ENCODE measurements at regions of chr1 and their contacts with region 1.

Region 1: GRCh38 chr1:154878371-154879022 is 8.4 kb upstream of the KCNN3 start:
- DNase-seq: peak; percentile 30
- H3K4me3 ChIP-seq: no peak overlapping the region
- H3K27ac ChIP-seq: no peak overlapping the region
- H3K27me3 ChIP-seq: peaks cover 59% of the 10 kb centered on the region
- CTCF ChIP-seq: peak; percentile 84

Region 2: DNA sequence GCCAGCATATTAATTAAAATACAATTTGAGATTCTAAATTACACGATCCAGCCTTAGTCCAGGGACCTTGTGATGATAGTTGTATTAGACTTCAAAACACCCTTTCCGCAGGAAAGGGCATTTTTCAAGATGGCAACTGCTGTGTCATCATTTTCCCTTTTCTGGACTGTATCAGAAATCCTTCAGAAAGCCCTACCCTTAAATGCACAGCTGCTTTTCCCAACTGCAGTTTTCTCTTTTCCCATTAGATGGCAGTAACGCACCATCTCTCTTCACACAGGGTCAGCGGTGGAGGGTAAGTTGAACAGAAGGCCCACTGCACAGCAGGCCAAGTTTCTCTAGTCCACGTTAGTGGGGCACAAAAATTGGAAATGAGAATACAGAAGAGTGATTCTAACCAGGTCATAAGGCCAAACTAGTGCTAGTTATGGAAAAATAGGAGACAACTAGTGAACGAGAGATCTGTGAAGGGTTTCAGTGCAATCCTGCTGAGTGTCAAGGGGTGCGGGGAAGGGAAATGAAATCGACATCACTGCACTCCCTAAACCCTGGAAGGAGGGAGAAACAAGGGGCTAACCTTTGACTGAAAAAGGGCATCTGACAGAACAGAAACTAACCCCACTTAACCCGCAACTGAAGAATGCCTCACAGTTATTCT is 398.6 kb before region 1 on chr1:
- CTCF ChIA-PET with region 1: interaction called, 13 read pairs
- POLR2A ChIA-PET with region 1: interaction called, 5 read pairs
- DNase-seq: peak; percentile 76
- H3K4me3 ChIP-seq: no peak overlapping the region
- H3K27ac ChIP-seq: no peak overlapping the region
- H3K27me3 ChIP-seq: no peaks in the 10 kb centered on the region
- CTCF ChIP-seq: peak; percentile 95

Region 3: GRCh38 chr1:154558575-154559465 is 319.7 kb before region 1 on chr1 and contains the start of gene UBE2Q1:
- CTCF ChIA-PET with region 1: interaction called, 33 read pairs
- POLR2A ChIA-PET with region 1: interaction called, 7 read pairs
- DNase-seq: peak; percentile 98
- H3K4me3 ChIP-seq: peak within 1 kb of the TSS; percentile 76
- H3K27ac ChIP-seq: peak within 1 kb of the TSS; percentile 91
- H3K27me3 ChIP-seq: no peaks in the 10 kb centered on the region
- CTCF ChIP-seq: no peak
- polyA plus RNA-seq, gene UBE2Q1: 16.9 and 17.6 TPM in 2 replicates

Region 4: GRCh38 chr1:154669464-154670282 is 208.8 kb before region 1 on chr1:
- CTCF ChIA-PET with region 1: interaction called, 20 read pairs
- POLR2A ChIA-PET with region 1: interaction called, 4 read pairs
- DNase-seq: peak; percentile 30
- H3K4me3 ChIP-seq: no peak overlapping the region
- H3K27ac ChIP-seq: no peak overlapping the region
- H3K27me3 ChIP-seq: peaks cover 5% of the 10 kb centered on the region
- CTCF ChIP-seq: peak; percentile 83

Region 5: DNA sequence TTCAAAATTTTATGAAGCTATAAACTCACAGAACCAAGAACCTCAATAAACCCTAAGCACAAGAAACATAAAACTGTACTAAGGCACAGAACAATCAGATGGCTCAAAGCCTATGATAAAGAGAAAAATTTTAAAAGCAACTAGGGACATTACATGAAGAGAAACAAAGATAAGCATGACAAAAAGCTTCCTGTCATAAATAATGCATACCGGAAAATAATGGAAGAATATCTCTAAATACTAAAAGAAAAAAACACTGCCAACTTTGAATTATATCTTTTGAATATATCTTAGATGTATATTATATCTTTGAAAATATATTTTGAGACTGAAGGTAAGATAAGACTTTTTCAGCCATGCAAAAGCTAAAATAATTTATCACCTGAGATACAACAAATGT is 13.0 kb after region 1 on chr1:
- CTCF ChIA-PET with region 1: interaction called, 10 read pairs
- POLR2A ChIA-PET with region 1: no interaction called
- DNase-seq: no peak
- H3K4me3 ChIP-seq: no peak overlapping the region
- H3K27ac ChIP-seq: no peak overlapping the region
- H3K27me3 ChIP-seq: peaks cover 51% of the 10 kb centered on the region
- CTCF ChIP-seq: no peak

Region 6: GRCh38 chr1:154974063-154974807 is 95.7 kb after region 1 on chr1 and contains the start of gene CKS1B:
- CTCF ChIA-PET with region 1: no interaction called
- POLR2A ChIA-PET with region 1: no interaction called
- DNase-seq: peak; percentile 100
- H3K4me3 ChIP-seq: peak within 1 kb of the TSS; percentile 77
- H3K27ac ChIP-seq: peak within 1 kb of the TSS; percentile 100
- H3K27me3 ChIP-seq: no peaks in the 10 kb centered on the region
- CTCF ChIP-seq: no peak
- polyA plus RNA-seq, gene CKS1B: 66.4 and 81.3 TPM in 2 replicates

Region 7: GRCh38 chr1:155513300-155513916 is 634.9 kb after region 1 on chr1:
- CTCF ChIA-PET with region 1: interaction called, 12 read pairs
- POLR2A ChIA-PET with region 1: no interaction called
- DNase-seq: no peak
- H3K4me3 ChIP-seq: no peak overlapping the region
- H3K27ac ChIP-seq: peak overlapping the region; percentile 52
- H3K27me3 ChIP-seq: no peaks in the 10 kb centered on the region
- CTCF ChIP-seq: peak; percentile 27